Left ventricle myocardium superior (tissue), 1 donor: ENCODE measurements at regions of chr2 and their contacts with region 1.

Region 1: DNA sequence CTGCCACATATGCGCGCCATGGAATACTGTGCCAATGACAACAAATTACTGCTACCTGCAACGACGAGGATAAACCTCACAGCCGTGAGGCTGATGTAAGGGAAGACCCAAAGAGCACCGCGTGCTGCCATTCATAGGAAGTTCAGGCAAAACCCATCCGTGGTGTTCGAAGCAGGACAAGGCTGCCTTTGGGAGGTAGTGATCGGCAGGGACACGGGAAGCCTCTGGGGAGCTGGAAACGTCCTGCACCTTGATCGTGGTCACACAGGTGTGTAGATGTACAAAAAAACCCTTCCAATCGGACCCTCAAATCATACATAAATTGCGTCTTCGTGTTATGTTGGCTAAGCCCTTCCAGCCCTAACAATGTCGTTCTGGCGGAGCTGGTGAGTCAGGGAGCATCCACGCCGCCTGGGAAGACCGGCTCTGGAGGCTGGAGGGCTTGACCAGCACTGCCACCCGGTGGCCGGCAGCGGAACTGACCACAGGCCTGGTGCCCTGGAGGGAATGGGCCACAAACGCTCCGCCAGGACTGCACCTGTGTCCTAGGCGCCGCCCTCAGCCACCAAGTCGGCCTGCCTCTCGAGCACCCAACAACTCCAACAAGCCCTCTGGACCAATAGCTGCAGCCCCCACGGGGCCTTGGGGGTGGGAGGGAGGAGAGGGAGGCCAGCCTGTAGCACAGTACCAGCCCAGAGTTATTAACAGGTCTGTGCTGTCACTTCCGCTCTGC is 4.1 kb upstream of the NEURL3 start:
- DNase-seq: peak; percentile 93
- ATAC-seq: peak; percentile 93

Region 2: GRCh38 chr2:96353032-96353561 is 156.2 kb before region 1 on chr2:
- intact Hi-C with region 1: no loop called
- DNase-seq: peak; percentile 78
- ATAC-seq: peak; percentile 65

Region 3: DNA sequence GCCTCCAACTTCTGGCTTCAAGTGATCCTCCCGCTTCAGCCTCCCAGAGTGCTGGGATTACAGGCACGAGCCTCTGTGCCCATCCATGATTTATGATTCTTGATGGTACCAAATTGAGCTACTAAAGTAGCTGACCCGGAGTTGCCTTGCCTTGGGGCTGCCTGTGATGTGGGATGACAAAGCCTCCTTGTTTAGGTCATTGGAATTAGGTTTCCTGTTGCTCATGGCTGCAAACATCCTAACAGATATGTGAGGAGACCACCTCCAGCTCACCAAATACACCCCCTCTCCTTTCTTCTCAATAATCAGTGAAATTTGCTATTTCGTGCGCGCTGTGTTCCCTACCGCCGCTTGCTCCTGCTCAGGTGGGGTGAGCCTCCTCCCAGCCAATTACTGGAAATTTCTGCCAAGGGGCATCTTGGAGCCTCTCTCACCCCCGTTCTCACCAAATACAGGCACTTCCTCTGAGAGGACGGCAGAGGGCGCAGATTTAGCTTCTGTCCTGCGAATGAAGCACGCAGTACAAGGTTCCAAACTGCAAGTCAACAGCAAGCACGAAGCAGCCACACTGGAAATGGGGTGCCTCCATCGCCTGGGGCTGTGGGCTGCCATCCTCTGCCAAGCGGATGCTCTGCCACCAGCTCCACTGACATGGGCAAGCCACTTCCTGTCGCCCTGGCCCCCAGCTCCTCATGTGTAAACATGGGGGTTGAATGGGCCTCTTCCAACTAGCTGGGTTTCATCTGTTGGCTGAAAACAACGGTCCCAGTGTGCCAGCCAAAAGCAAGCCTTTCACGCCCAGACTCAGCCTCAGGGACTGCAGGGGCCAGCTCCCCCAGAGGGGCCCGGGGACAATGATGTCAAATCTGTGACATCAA is 102.0 kb before region 1 on chr2:
- intact Hi-C with region 1: loop called (anchors 5 kb)
- DNase-seq: peak; percentile 60
- ATAC-seq: peak; percentile 62

Region 4: DNA sequence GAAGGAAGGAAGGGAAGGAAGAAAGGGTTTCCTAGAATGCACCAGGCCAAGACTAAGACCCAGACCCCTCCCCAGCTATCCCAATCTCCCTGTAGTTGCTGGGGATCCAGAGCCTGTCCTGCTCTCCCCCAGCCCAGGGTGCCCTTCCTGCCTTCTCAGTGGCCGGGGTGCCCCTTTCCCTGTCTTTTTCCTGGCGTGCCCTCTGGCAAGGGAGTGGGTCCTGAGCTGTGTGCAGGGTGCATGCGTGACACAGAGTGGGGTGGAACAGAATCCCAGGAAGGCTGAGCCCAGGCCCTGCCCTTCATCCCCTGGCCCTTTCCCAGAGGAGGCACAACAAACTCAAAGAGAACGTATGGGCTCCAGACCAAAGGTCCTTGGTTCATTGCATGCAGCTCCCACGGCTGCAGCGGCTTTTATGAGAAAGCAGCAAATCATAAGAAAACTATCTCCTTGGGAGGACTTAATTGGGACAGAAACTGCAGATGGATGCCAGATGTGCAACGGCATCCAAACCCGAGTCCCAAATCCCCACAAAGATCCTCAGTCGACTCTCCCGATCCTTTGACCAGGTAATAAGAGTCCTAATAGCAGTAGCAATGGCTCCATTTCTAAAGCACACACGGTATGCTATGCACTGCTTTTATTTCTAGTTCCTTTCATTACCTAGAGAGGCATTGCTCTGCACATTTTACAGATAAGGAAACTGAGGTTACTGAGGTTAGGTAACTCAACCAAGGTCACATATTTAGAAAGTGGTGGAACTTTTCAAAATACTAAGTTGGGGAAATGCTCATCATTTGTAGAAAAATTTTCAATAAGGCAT is 14.6 kb after region 1 on chr2:
- intact Hi-C with region 1: no loop called
- DNase-seq: peak; percentile 17
- ATAC-seq: no peak